Prostate gland (tissue), 2 donors: ENCODE measurements at regions of chr13 and their contacts with region 1.

Region 1: GRCh38 chr13:111216166-111216960 is 101.3 kb downstream of the ARHGEF7 start:
- DNase-seq: no peak
- H3K4me3 ChIP-seq: no peak overlapping the region
- H3K27ac ChIP-seq: no peak overlapping the region
- H3K4me1 ChIP-seq: peaks cover 3% of the 10 kb centered on the region
- H3K27me3 ChIP-seq: no peaks in the 10 kb centered on the region
- CTCF ChIP-seq: peak in 3 of 4 experiments; percentile 38 to 45 (median 38)
- POLR2A ChIP-seq: no peak

Region 2: DNA sequence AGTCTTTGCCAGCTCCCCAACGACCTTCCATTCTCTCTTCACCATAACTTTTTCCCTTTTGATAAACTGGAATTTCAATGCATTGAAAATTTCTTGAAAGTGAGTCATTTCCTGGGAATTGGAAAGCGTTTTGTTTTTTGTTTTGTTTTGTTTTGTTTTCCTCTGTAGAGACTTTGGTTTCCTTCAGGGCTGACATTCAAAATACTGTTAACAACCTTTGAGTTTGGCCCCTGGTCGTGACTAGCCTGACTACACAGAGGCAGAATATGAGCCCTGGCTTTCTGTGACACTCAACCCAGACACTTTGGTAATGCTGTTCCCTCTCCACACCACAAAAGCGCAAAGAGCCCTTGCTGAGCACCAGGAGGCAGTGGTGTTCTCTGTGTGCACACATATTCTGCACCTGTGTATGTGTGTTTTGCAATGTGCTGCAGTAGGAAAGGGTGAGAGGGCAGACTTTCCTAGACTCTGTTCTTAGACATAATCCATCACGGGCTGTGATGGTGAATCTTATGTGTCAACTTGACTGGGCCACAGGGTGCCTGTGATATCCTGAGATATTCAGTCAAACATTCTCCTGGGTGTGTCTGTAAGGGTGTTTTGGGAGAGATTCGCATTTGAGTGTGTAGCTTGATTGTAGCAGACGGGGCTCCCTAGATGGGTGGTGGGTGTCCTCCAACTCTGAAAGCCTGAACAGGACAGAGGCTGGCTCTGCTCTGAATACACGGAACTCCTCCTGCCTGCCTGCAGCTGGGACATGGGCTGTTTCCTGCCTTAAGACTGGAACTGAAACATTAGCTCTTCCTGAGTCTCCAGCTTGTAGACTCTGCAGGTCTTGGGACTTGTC is 272.0 kb before region 1 on chr13:
- intact Hi-C with region 1: no loop called
- DNase-seq: peak; percentile 36
- H3K4me3 ChIP-seq: no peak overlapping the region
- H3K27ac ChIP-seq: no peak overlapping the region
- H3K4me1 ChIP-seq: no peaks in the 10 kb centered on the region
- H3K27me3 ChIP-seq: no peaks in the 10 kb centered on the region
- CTCF ChIP-seq: peak in 3 of 4 experiments; percentile 55 to 75 (median 61)
- POLR2A ChIP-seq: no peak

Region 3: DNA sequence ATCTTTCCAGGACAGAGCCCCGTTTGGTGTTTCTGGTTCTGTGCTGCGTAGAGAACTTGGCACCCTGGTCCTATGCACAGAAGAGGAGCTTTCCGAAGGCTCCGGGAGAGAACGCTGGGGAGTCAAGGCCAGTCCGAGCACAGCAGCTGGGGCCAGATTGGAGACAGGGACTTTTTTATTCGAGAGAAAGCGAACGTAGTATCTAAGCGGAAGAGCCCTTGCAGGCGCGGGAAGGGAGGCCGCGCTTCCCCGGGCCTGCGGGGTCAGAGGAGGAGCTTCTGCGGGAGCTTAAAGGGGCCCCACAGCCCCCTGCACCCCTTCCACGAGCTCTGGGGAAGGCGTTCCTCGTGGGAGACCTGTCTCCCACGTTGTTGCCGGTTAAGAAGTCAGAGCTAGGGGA is 149.8 kb before region 1 on chr13:
- intact Hi-C with region 1: loop called (anchors 5 kb)
- DNase-seq: no peak
- H3K4me3 ChIP-seq: no peak overlapping the region
- H3K27ac ChIP-seq: no peak overlapping the region
- H3K4me1 ChIP-seq: no peaks in the 10 kb centered on the region
- H3K27me3 ChIP-seq: no peaks in the 10 kb centered on the region
- CTCF ChIP-seq: no peak
- POLR2A ChIP-seq: no peak

Region 4: DNA sequence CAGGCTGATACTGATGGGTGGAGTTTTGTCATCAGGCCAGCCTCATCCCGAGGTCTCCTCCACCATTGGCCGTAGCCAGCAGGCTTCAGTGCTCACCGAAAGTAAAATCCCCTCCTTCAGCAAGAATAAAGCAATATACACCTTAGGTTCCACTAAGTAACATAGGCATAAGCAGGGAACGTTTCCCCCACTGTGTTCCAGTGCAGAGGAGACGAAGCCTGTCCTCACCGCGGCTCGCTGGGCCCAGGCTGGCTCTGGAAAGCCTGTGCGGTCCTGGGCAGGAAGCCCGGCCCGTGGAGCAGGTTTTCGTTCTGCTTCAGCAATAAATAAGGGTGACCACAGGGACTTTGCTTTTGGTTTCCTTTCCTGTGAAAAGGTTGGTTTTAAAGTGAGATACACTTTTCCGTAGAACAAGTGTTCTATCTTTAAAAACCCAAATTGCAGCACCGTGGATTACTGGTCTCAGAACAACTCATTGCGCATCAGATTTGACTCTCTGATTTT is 87.7 kb after region 1 on chr13:
- intact Hi-C with region 1: no loop called
- DNase-seq: no peak
- H3K4me3 ChIP-seq: no peak overlapping the region
- H3K27ac ChIP-seq: no peak overlapping the region
- H3K4me1 ChIP-seq: no peaks in the 10 kb centered on the region
- H3K27me3 ChIP-seq: no peaks in the 10 kb centered on the region
- CTCF ChIP-seq: no peak
- POLR2A ChIP-seq: no peak